Activated CD4-positive, alpha-beta memory T cell treated with anti-CD3 and anti-CD28 coated beads for 36 hours (primary cell): ENCODE measurements at regions of chr5 and their contacts with region 1.

Region 1: GRCh38 chr5:34533582-34534522 is 122.3 kb upstream of the RAI14 start:
- DNase-seq: peak; percentile 48
- H3K4me3 Mint-ChIP-seq: no peak overlapping the region
- H3K27ac Mint-ChIP-seq: peak overlapping the region; percentile 24
- H3K4me1 Mint-ChIP-seq: peaks cover 28% of the 10 kb centered on the region
- H3K27me3 Mint-ChIP-seq: peaks cover 3% of the 10 kb centered on the region

Region 2: GRCh38 chr5:32604800-32605765 is 1928.8 kb before region 1 on chr5:
- CTCF ChIA-PET with region 1: no interaction called
- POLR2A ChIA-PET with region 1: no interaction called
- intact Hi-C with region 1: no loop called
- DNase-seq: no peak
- H3K4me3 Mint-ChIP-seq: no peak overlapping the region
- H3K27ac Mint-ChIP-seq: peak overlapping the region; percentile 16
- H3K4me1 Mint-ChIP-seq: peaks cover 14% of the 10 kb centered on the region
- H3K27me3 Mint-ChIP-seq: no peaks in the 10 kb centered on the region

Region 3: GRCh38 chr5:34007621-34008600 is 525.9 kb before region 1 on chr5 and contains the start of gene AMACR:
- CTCF ChIA-PET with region 1: no interaction called
- POLR2A ChIA-PET with region 1: no interaction called
- intact Hi-C with region 1: loop called (anchors 10 kb)
- DNase-seq: peak; percentile 91
- H3K4me3 Mint-ChIP-seq: peak within 1 kb of the TSS; percentile 91
- H3K27ac Mint-ChIP-seq: peak within 1 kb of the TSS; percentile 93
- H3K4me1 Mint-ChIP-seq: peaks cover 32% of the 10 kb centered on the region
- H3K27me3 Mint-ChIP-seq: no peaks in the 10 kb centered on the region
- total RNA-seq, gene AMACR: 11.5 TPM

Region 4: DNA sequence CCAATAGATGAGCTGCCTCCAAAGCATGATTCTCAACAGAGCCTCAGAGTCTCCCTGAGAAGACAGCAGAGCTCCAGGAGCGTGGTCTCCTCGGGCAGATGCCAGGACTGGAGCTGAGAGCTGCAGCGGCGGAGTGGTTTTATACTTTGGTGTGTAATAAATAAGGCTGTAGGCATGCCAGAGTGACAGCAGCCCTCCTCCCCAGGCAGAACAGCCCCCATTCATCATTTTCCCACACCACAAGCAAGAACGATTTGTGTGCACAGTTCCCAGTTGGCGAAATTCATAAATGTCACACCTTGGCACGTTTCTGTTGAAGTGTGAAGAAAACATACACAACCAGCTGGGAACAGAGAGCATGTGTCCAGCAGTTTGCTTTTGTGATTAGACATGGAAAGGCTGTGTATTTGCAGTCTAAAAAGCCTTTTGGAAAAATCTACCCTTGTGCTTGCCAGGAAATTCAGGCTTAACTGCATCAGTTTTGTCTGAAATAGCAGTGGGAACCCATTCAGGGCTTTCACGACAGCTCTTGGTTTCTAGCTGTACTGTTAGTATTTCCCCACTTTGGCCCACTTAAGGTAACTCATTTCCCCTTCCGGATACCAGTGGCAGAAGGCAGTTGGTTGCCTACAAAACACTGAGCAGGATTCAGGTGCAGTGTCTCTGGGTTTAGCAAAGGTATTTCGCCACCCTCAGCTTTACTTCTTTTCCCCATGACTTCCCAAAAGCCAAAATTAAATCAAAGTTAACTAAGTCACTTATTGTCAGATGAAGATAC is 490.6 kb before region 1 on chr5 and contains the start of gene C1QTNF3:
- CTCF ChIA-PET with region 1: no interaction called
- POLR2A ChIA-PET with region 1: no interaction called
- intact Hi-C with region 1: no loop called
- DNase-seq: no peak
- H3K4me3 Mint-ChIP-seq: no peak within 1 kb of the TSS
- H3K27ac Mint-ChIP-seq: no peak within 1 kb of the TSS
- H3K4me1 Mint-ChIP-seq: no peaks in the 10 kb centered on the region
- H3K27me3 Mint-ChIP-seq: no peaks in the 10 kb centered on the region
- total RNA-seq, gene C1QTNF3: 2.5 to 2.6 TPM

Region 5: GRCh38 chr5:34480810-34481528 is 52.9 kb before region 1 on chr5:
- CTCF ChIA-PET with region 1: interaction called, 40 read pairs
- POLR2A ChIA-PET with region 1: no interaction called
- intact Hi-C with region 1: loop called (anchors 1 kb)
- DNase-seq: peak; percentile 47
- H3K4me3 Mint-ChIP-seq: no peak overlapping the region
- H3K27ac Mint-ChIP-seq: no peak overlapping the region
- H3K4me1 Mint-ChIP-seq: peaks cover 16% of the 10 kb centered on the region
- H3K27me3 Mint-ChIP-seq: peaks cover 37% of the 10 kb centered on the region

Region 6: DNA sequence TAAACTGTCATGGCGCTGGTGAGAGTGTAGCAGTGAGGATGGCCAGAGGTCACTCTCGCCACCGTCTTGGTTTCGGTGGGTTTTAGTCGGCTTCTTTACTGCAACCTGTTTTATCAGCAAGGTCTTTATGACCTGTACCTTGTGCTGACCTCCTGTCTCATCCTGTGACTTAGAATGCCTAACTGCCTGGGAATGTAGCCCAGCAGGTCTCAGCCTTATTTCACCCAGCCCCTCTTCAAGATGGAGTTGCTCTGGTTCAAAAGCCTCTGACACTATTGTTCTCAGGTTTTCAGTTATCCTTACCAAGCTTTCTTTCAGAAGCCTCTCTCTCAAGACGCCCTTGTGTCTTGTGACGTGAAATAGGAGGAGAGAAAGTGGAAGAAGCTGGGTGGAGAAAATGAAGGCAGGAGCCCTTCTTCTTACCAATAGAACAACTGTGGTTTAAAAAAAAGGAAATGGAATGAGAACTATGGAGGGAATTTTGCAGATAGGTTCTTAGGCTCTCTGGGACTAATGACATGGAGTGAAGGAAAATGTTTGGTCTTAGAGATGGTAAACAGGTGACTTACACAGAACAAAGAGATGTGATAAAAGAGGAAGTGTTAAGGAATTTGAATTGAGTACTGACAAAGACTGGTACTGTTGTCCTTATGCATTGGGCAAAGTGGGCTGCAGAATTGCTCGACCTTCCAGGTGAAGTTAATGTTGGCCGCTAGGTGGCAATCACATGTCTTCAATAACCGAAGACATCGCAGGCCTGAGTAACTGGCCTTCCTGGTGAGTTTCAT is 11.1 kb before region 1 on chr5:
- CTCF ChIA-PET with region 1: interaction called, 29 read pairs
- POLR2A ChIA-PET with region 1: no interaction called
- intact Hi-C with region 1: loop called (anchors 1 kb)
- DNase-seq: peak; percentile 60
- H3K4me3 Mint-ChIP-seq: no peak overlapping the region
- H3K27ac Mint-ChIP-seq: no peak overlapping the region
- H3K4me1 Mint-ChIP-seq: peaks cover 4% of the 10 kb centered on the region
- H3K27me3 Mint-ChIP-seq: peaks cover 4% of the 10 kb centered on the region

Region 7: DNA sequence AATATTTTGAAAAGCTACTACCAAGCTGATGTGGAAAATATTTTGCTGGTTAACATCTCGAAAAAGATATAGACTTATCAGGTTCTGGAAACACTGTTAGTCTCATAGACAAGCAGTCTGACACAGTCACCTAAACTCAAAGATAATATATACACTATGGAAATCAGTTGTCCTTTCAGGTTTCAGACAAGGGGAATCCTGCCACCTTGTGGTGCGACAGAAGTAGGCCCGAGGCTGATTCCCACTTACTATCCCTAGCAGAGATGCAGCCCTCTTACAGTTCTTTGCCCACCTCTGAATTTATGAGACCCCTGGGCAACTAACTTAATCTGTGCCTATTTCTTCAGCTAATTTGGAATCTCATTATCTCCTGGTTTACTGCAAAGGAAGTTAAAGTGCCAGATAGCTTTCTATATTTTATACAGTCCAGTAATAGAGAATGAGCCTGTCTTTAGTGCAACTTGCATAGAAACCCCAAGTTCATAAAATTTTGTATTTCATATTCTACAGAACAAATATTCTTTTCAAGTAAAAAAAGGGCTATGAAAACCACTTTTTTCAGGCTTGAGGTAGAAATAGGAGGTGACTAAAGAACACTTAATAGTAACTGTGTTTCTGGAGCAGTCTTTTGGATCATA is 364.5 kb after region 1 on chr5:
- CTCF ChIA-PET with region 1: interaction called, 18 read pairs
- POLR2A ChIA-PET with region 1: no interaction called
- intact Hi-C with region 1: no loop called
- DNase-seq: peak; percentile 67
- H3K4me3 Mint-ChIP-seq: no peak overlapping the region
- H3K27ac Mint-ChIP-seq: no peak overlapping the region
- H3K4me1 Mint-ChIP-seq: no peaks in the 10 kb centered on the region
- H3K27me3 Mint-ChIP-seq: no peaks in the 10 kb centered on the region